Caco-2 (cell line): ENCODE measurements at regions of chr1 and their contacts with region 1.

Region 1: GRCh38 chr1:21255278-21255942 is 34.9 kb downstream of the ECE1 start:
- DNase-seq: peak; percentile 83 to 89
- H3K4me3 ChIP-seq: no peak overlapping the region
- H3K4me3 Mint-ChIP-seq: no peak overlapping the region
- H3K27ac Mint-ChIP-seq: no peak overlapping the region
- H3K4me1 ChIP-seq: peaks cover 25% of the 10 kb centered on the region
- H3K4me1 Mint-ChIP-seq: peaks cover 13% of the 10 kb centered on the region
- H3K27me3 ChIP-seq: no peaks in the 10 kb centered on the region
- H3K27me3 Mint-ChIP-seq: no peaks in the 10 kb centered on the region
- CTCF ChIP-seq: peak; percentile 61 to 83

Region 2: DNA sequence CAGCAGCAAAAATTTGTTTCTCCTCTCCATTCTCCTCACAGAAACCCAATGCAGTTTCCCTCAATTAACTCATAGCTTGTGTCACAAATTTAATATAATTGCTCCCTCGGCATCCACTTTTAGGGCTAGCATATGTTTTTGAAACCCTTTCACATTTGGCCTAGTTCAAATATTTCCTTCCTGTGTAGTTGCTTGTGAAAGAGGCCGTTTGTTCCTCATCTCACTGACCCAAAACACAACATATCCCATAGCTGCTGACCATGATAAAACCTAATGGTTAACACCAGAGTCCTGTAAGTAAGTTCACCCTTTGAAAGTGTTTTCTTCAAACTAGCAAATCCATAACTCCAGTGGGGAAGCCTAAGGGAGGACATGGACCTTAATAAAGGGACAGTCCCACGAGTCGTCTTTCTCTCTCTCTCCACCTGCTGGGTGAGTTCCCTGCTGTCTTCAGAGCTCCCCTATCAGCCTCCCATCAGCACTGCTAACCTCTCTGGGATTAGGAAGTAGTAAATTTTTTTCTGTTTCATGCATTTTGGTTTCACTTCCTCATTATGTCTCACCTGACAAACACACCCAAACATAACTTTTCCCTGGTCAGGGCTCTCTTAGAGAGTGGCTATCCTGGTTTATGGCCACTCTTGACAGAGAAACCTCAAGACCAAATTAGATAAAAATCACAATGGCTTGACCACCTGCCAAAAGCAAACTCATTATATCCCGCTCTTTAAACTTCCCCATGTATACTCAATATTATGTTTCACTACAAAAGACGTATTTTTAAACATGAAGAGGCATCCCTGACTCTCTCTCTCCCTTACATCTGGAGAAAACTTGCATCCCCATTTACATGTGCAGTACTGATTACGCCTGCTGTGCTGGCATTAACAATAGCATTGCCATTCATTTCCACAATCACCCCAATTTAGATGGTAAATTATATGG is 290.6 kb before region 1 on chr1:
- CTCF ChIA-PET with region 1: no interaction called
- POLR2A ChIA-PET with region 1: no interaction called
- intact Hi-C with region 1: no loop called
- DNase-seq: peak; percentile 12 to 34
- H3K4me3 ChIP-seq: no peak overlapping the region
- H3K4me3 Mint-ChIP-seq: no peak overlapping the region
- H3K27ac Mint-ChIP-seq: peak overlapping the region; percentile 4
- H3K4me1 ChIP-seq: no peaks in the 10 kb centered on the region
- H3K4me1 Mint-ChIP-seq: peaks cover 12% of the 10 kb centered on the region
- H3K27me3 ChIP-seq: no peaks in the 10 kb centered on the region
- H3K27me3 Mint-ChIP-seq: no peaks in the 10 kb centered on the region
- CTCF ChIP-seq: peak in 1 of 2 experiments; percentile 15

Region 3: GRCh38 chr1:21165646-21166045 is 89.8 kb before region 1 on chr1:
- CTCF ChIA-PET with region 1: no interaction called
- POLR2A ChIA-PET with region 1: no interaction called
- intact Hi-C with region 1: no loop called
- DNase-seq: no peak
- H3K4me3 ChIP-seq: no peak overlapping the region
- H3K4me3 Mint-ChIP-seq: no peak overlapping the region
- H3K27ac Mint-ChIP-seq: no peak overlapping the region
- H3K4me1 ChIP-seq: no peaks in the 10 kb centered on the region
- H3K4me1 Mint-ChIP-seq: peaks cover 2% of the 10 kb centered on the region
- H3K27me3 ChIP-seq: no peaks in the 10 kb centered on the region
- H3K27me3 Mint-ChIP-seq: no peaks in the 10 kb centered on the region
- CTCF ChIP-seq: no peak

Region 4: DNA sequence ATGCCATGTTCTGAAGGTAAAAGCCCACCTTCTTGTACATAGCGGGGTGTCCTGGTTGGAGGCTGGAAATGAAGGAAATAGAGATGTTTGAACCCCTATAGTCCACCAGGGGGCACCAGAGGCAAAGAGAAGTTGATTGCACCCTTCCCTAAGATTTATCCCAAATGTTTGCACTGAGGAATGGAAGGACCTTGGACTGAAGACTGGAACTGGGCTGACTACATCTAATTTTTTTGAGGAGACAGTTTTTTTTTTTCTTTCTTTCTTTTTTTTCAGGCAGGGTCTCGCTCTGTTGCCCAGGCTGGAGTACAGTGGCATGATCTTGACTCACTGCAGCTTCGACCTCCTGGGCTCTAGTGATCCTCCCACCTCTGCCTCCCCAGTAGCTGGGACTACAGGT is 23.4 kb before region 1 on chr1:
- CTCF ChIA-PET with region 1: interaction called, 16 read pairs
- POLR2A ChIA-PET with region 1: no interaction called
- intact Hi-C with region 1: loop called (anchors 1 kb)
- DNase-seq: peak; percentile 46 to 68
- H3K4me3 ChIP-seq: no peak overlapping the region
- H3K4me3 Mint-ChIP-seq: no peak overlapping the region
- H3K27ac Mint-ChIP-seq: no peak overlapping the region
- H3K4me1 ChIP-seq: peaks cover 5% of the 10 kb centered on the region
- H3K4me1 Mint-ChIP-seq: no peaks in the 10 kb centered on the region
- H3K27me3 ChIP-seq: no peaks in the 10 kb centered on the region
- H3K27me3 Mint-ChIP-seq: no peaks in the 10 kb centered on the region
- CTCF ChIP-seq: peak; percentile 73 to 84

Region 5: GRCh38 chr1:21270086-21270689 is 14.8 kb after region 1 on chr1:
- CTCF ChIA-PET with region 1: interaction called, 36 read pairs
- POLR2A ChIA-PET with region 1: no interaction called
- intact Hi-C with region 1: loop called (anchors 1 kb)
- DNase-seq: peak; percentile 75 to 79
- H3K4me3 ChIP-seq: no peak overlapping the region
- H3K4me3 Mint-ChIP-seq: no peak overlapping the region
- H3K27ac Mint-ChIP-seq: no peak overlapping the region
- H3K4me1 ChIP-seq: peaks cover 31% of the 10 kb centered on the region
- H3K4me1 Mint-ChIP-seq: no peaks in the 10 kb centered on the region
- H3K27me3 ChIP-seq: no peaks in the 10 kb centered on the region
- H3K27me3 Mint-ChIP-seq: no peaks in the 10 kb centered on the region
- CTCF ChIP-seq: peak; percentile 66 to 71

Region 6: DNA sequence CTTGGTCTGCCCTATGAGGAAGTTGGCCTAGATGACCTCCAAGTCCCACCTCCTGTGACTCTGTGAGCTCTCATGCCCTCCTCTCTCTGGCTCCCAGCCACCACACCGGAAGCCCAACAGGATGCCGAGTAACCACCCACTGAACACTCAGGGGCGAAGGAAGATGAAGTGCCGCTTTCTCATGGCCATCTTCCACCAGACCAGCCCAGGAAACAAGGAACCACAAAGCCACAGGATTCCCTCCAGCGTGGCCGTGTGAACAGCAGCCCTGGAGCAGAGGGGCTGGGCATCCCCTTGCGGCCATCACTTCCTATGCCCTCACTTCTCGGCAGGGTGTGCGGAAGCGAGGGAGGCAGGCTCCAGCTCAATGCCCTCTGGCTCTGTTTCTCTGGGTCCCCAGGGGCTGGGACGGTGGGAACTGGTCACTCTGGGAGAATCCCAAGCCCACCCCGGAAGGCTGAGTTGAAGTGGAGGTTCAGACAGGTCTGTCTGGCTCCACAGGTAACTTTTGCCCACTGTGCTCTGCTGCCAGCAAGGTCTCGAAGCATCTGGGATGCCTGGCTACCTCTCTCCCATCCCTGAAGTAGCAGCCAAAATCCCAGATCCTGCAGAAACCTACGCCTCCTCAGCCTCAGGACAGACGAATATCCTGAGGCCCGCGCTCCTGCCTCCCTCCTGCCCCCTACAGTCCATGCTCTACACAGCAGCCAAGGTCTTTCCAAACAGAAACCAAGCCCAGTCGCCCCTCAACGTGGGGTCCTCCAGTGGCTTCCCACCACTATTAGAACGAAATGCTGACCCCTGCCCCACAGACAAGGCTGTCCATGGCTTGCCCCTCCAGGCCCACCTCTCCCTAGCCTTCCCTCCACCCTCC is 79.0 kb after region 1 on chr1:
- CTCF ChIA-PET with region 1: interaction called, 8 read pairs
- POLR2A ChIA-PET with region 1: interaction called, 3 read pairs
- intact Hi-C with region 1: loop called (anchors 2 kb)
- DNase-seq: peak in 1 of 2 experiments; percentile 44
- H3K4me3 ChIP-seq: no peak overlapping the region
- H3K4me3 Mint-ChIP-seq: no peak overlapping the region
- H3K27ac Mint-ChIP-seq: no peak overlapping the region
- H3K4me1 ChIP-seq: peaks cover 19% of the 10 kb centered on the region
- H3K4me1 Mint-ChIP-seq: peaks cover 13% of the 10 kb centered on the region
- H3K27me3 ChIP-seq: no peaks in the 10 kb centered on the region
- H3K27me3 Mint-ChIP-seq: no peaks in the 10 kb centered on the region
- CTCF ChIP-seq: peak; percentile 36 to 39

Region 7: DNA sequence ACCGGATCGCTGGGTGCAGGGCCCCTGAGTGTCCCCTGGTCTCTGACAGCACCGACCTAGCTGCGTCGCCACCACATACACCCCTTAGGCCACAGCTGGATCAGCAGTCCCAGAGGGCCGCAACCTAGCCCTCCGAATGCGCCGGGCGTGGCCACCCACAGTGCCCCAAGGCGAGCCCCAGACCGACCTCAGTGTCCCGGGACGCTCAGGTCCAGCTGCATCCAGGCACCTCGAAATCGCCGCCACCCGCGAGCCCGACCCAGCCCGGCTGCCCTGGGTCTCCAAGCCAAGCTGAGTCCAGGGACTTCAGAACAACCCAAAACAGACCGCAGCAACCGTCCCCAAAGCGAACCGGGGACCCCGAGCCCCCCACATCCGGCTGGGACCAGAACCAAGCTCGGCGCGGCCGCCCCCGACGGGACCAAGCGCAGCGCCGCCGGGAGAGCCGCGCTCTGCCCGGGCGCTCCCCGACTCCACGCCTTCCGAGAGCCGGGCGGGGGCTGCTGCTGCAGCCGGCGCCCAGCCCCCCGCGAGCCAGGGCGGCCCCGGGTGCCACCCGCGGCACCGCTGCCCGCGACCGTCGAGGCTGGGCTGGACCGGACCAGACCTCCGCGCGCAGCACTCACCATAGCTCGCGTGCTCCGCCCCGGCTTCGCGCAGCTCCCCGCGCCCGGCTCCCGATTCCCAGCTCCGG is 89.5 kb after region 1 on chr1:
- CTCF ChIA-PET with region 1: interaction called, 12 read pairs
- POLR2A ChIA-PET with region 1: interaction called, 7 read pairs
- intact Hi-C with region 1: no loop called
- DNase-seq: peak in 1 of 2 experiments; percentile 25
- H3K4me3 ChIP-seq: peak overlapping the region; percentile 84
- H3K4me3 Mint-ChIP-seq: no peak overlapping the region
- H3K27ac Mint-ChIP-seq: no peak overlapping the region
- H3K4me1 ChIP-seq: no peaks in the 10 kb centered on the region
- H3K4me1 Mint-ChIP-seq: peaks cover 13% of the 10 kb centered on the region
- H3K27me3 ChIP-seq: no peaks in the 10 kb centered on the region
- H3K27me3 Mint-ChIP-seq: no peaks in the 10 kb centered on the region
- CTCF ChIP-seq: no peak

Region 8: DNA sequence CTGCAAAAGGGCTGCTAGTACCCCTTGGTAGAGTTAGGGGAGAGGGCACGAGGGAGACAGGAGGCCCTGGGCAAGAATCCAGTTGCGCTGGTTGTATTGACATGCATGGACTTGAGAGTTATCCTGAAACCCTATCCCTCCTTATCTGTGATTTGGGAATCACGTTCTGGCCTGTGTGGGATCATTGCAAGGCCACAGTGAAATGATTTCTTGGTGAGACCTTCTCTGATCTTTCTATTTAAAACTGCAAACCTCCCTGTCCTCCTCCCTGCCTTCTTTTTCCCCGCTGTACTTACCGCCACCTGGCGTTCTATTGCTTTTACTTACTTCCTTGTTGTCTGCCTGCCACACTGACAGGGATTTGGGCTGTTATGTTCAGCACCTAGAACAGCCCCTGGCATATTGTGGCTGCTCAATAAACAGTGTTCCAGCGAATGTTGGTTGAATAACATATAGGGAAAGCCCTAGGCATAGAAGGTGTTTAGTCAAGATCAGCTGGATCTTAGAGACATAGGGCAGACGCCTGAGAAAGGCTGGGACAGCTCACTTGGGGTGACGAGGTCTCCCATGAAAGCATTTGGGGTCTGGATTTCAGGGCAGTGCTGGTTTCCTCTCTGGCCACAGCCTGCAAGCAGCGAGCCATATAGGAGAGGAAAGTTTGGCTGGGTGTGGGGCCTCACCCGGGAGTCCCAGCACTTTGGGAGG is 279.4 kb after region 1 on chr1:
- CTCF ChIA-PET with region 1: no interaction called
- POLR2A ChIA-PET with region 1: no interaction called
- intact Hi-C with region 1: loop called (anchors 10 kb)
- DNase-seq: peak; percentile 54 to 64
- H3K4me3 ChIP-seq: no peak overlapping the region
- H3K4me3 Mint-ChIP-seq: no peak overlapping the region
- H3K27ac Mint-ChIP-seq: no peak overlapping the region
- H3K4me1 ChIP-seq: peaks cover 6% of the 10 kb centered on the region; the same call in 1 of the 2 replicates
- H3K4me1 Mint-ChIP-seq: peaks cover 5% of the 10 kb centered on the region
- H3K27me3 ChIP-seq: no peaks in the 10 kb centered on the region
- H3K27me3 Mint-ChIP-seq: peaks cover 3% of the 10 kb centered on the region
- CTCF ChIP-seq: peak; percentile 37 to 61